Activated T-helper 1 cell treated with anti-CD3 and anti-CD28 coated beads, Interleukin-12 subunit alpha, Interleukin-12 subunit beta, Interleukin-2, Interleukin-4 antibody, amounts not matched to agents 30 ng/mL and 10 ng/mL and 1 ng/mL, durations not matched to agents 14 hours and 24 hours and 36 hours (primary cell): ENCODE measurements at regions of chr2 and their contacts with region 1.

Region 1: DNA sequence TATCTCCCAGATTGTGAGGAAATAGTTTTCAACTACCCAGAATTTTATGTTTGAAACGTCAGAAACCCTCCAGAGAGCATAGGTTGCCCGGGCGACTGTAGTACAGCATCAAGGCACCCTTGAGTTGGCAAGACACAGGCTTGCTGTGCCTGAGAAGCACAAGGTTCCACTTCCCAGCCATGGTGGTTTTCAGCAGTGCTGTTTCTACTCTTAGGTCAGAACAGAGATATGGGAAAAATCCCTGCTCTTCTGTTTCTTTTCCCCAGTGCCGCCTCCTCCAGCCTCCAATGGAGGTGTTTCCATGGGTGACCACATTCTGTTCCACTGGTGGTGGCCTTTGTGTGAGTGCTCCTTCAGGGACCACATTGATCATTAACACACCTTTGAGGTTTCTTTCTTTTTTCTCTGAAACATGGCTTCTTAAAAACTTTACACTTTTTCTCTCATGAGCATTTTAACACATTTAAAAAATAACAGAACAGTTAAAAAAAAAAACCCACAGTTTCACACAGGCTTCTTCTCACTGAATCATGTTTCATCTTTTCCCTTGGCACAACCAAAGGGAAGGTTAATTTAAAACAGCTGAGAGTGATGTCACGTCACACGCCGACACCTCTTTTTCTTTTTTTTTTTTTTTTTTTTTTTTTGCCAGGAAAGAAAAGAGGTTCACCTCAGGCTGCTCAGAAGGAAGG is 229.3 kb upstream of the HDAC4 start:
- DNase-seq: no peak
- H3K4me3 Mint-ChIP-seq: no peak overlapping the region
- H3K27ac Mint-ChIP-seq: no peak overlapping the region
- H3K4me1 Mint-ChIP-seq: peaks cover 13% of the 10 kb centered on the region
- H3K27me3 Mint-ChIP-seq: peaks cover 9% of the 10 kb centered on the region

Region 2: GRCh38 chr2:239288951-239289511 is 341.0 kb before region 1 on chr2:
- intact Hi-C with region 1: no loop called
- DNase-seq: peak; percentile 61
- H3K4me3 Mint-ChIP-seq: peak overlapping the region; percentile 77
- H3K27ac Mint-ChIP-seq: peak overlapping the region; percentile 98
- H3K4me1 Mint-ChIP-seq: peaks cover 78% of the 10 kb centered on the region
- H3K27me3 Mint-ChIP-seq: peaks cover 7% of the 10 kb centered on the region

Region 3: GRCh38 chr2:239463541-239464165 is 166.4 kb before region 1 on chr2:
- intact Hi-C with region 1: no loop called
- DNase-seq: no peak
- H3K4me3 Mint-ChIP-seq: no peak overlapping the region
- H3K27ac Mint-ChIP-seq: no peak overlapping the region
- H3K4me1 Mint-ChIP-seq: no peaks in the 10 kb centered on the region
- H3K27me3 Mint-ChIP-seq: peaks cover 4% of the 10 kb centered on the region

Region 4: DNA sequence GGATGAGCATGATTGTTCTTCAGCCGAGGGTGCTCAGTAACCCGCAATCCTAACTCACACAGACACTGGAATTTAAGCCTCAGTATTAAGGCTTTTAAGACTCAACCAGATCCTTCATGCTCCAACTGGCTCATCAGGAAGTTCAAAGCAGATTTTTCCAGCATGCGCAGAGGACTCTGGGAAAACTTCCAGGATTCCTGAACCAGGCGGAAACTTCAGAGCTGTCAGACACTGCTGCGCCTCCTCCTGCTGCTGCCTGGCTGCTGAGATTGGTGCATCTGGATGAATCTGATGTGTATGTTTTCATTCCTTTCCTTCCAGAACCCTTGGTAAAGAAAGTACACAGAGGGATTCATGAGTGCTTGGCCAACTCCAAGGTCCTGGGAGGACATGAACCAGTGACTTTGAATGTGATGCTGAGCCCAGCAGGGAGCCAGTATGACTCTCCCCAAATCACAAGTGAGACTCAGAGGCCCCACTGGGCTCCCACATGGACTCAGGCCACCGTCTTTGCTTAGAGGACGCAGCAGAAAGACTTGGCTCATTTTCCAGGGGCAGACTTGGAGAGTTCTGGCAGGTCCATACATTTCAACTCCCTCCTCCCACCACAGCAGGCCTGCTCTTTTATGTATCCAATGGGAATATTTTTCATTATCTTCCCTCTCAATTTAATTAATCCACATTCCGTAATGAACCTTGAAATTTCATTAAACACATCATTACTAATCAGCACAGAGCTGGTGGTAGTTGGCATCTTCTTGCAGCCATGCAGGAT is 85.7 kb before region 1 on chr2:
- intact Hi-C with region 1: loop called (anchors 10 kb)
- DNase-seq: no peak
- H3K4me3 Mint-ChIP-seq: no peak overlapping the region
- H3K27ac Mint-ChIP-seq: no peak overlapping the region
- H3K4me1 Mint-ChIP-seq: peaks cover 35% of the 10 kb centered on the region
- H3K27me3 Mint-ChIP-seq: peaks cover 27% of the 10 kb centered on the region

Region 5: DNA sequence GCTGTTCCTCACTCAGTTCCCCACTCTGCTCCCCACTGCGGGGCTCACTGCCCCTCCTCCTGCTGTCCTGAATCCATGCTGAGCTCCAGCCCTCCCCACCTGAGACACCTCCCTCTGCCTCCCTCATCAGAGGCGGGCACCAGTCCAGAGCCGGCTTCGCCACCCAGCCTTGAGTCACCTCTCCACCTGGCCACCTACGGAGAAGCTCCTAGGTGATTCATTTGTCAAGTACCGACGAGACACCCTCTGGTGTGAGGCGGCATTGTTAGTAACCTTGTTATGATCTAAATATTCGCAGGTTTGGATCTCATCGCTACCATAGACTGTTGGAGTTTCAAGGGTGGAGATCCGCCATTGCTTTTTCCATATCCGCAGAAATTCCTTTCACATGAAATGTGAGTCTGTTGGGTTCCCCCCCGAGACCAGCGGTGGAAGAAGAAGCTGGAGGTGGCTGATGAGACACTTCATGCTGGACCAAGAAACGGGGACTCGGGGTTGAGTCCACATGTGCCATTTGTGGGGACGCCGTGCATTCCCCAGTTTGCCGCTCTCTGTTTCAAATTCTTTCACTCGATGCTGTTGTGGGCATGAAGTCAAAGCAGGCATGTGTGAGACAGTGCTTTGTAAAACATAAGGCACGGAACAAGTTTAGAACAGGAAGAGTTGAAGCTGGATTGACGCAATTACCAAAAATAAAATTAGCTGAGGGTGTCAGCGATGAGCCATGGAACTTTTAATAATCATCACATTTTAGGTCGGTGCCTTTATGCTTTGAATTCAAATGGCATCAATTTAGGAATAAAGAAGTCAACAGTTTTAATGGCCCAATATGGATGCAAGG is 30.5 kb after region 1 on chr2:
- intact Hi-C with region 1: loop called (anchors 1 kb)
- DNase-seq: no peak
- H3K4me3 Mint-ChIP-seq: no peak overlapping the region
- H3K27ac Mint-ChIP-seq: no peak overlapping the region
- H3K4me1 Mint-ChIP-seq: no peaks in the 10 kb centered on the region
- H3K27me3 Mint-ChIP-seq: peaks cover 12% of the 10 kb centered on the region